SK-N-SH (cell line): ENCODE measurements at regions of chr1 and their contacts with region 1.

Region 1: DNA sequence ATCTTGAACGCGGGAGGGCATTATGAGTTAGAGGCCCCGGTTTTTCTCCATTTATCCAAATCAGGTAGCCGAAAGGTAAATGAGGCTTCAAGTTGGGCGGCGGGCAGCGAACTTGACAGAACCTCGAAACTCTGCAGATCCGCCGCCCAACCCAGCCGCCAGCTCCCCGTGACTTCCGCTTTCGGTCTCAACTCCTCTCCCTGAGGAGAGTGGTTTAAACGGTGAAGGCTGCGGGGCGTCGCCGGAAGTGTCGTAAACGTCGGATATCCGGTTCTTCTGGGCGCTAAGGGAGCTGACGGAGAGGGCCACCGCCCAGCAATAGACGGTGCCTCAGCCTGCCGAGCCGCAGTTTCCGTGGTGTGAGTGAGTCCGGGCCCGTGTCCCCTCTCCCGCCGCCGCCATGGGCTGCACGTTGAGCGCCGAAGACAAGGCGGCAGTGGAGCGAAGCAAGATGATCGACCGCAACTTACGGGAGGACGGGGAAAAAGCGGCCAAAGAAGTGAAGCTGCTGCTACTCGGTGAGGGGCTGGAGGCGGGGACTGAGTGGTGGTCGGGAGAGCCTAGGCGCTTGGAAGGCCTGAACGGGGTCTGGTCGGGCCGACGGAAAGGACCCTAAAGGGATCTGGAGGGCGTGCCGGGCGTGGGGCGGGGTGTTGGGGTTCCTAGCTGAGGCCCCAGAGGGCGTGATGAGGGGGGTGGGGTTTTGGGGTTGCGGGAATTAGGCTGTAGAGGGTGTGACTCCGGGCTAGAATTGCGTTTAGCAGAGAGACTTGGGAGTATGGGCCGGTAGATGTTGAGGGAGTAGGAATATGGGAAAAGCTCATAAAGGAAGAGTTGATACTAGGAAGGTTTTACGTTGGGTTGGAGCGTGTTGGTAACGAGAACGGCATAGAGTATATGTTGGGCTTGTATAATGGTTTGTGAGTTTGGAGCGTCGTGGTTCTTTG is at the start of gene GNAI3:
- DNase-seq: peak; percentile 90
- H3K4me3 ChIP-seq: peak within 1 kb of the TSS; percentile 80 to 88
- H3K27ac ChIP-seq: peak within 1 kb of the TSS; percentile 88 to 93
- H3K4me1 ChIP-seq: peaks cover 3 to 20% of the 10 kb centered on the region in 2 experiments; a peak in 3 of 4 replicates
- H3K27me3 ChIP-seq: no peaks in the 10 kb centered on the region
- CTCF ChIP-seq: no peak
- EP300 ChIP-seq: peak in 1 of 2 experiments; percentile 33; a peak in 1 of 4 replicates
- RAD21 ChIP-seq: no peak; the same call in 1 of the 2 replicates
- polyA plus RNA-seq, gene GNAI3: 4.0 and 4.8 TPM in 2 replicates

Region 2: GRCh38 chr1:109620841-109621286 is 72.3 kb after region 1 on chr1:
- CTCF ChIA-PET with region 1: interaction called, 14 read pairs
- POLR2A ChIA-PET with region 1: interaction called, 22 read pairs
- DNase-seq: peak; percentile 95
- H3K4me3 ChIP-seq: peak overlapping the region; percentile 85 to 98
- H3K27ac ChIP-seq: peak overlapping the region; percentile 97 to 98
- H3K4me1 ChIP-seq: peaks cover 28 to 60% of the 10 kb centered on the region in 2 experiments; a peak in 3 of 4 replicates
- H3K27me3 ChIP-seq: no peaks in the 10 kb centered on the region
- CTCF ChIP-seq: no peak
- EP300 ChIP-seq: no peak
- RAD21 ChIP-seq: no peak

Region 3: DNA sequence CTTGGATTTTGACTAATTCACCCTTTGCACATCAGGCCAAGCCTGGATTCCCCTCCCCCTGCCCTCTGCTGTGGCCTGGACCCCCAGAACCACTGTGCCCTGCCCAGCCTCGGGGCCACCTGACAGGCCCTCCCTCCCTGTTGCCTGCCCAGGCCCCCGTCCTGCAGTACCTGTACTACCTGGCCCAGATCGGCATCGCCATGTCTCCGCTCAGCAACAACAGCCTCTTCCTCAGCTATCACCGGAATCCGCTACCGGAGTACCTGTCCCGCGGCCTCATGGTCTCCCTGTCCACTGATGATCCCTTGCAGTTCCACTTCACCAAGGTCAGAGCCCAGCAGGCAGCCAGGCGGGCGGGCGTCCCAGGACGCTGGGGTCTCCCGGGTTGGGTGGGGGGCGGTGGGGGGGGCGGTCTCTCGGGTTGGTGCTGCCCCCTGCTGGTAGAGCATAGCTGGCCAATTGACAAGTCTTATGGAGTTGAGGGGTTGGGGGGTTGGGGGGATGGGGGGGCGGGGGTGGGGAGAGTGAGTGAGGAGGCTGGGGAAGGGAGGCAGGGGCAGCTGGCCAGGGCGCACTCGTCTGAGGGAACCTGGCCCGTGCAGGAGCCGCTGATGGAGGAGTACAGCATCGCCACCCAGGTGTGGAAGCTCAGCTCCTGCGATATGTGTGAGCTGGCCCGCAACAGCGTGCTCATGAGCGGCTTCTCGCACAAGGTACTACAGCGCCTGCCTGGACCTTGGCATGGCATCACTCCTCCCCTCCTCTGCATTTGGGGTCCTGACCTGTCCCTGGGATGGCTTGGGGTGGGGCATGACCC is 81.7 kb after region 1 on chr1:
- CTCF ChIA-PET with region 1: interaction called, 75 read pairs
- POLR2A ChIA-PET with region 1: interaction called, 26 read pairs
- DNase-seq: peak; percentile 84
- H3K4me3 ChIP-seq: no peak overlapping the region
- H3K27ac ChIP-seq: peak overlapping the region in 1 of 2 experiments; percentile 97; a peak in 2 of 4 replicates
- H3K4me1 ChIP-seq: peaks cover 0 to 46% of the 10 kb centered on the region in 2 experiments; a peak in 2 of 4 replicates
- H3K27me3 ChIP-seq: no peaks in the 10 kb centered on the region
- CTCF ChIP-seq: 0 out of 2 replicates have a peak, but pooled peaks have one; percentile 4
- EP300 ChIP-seq: no peak
- RAD21 ChIP-seq: no peak

Region 4: DNA sequence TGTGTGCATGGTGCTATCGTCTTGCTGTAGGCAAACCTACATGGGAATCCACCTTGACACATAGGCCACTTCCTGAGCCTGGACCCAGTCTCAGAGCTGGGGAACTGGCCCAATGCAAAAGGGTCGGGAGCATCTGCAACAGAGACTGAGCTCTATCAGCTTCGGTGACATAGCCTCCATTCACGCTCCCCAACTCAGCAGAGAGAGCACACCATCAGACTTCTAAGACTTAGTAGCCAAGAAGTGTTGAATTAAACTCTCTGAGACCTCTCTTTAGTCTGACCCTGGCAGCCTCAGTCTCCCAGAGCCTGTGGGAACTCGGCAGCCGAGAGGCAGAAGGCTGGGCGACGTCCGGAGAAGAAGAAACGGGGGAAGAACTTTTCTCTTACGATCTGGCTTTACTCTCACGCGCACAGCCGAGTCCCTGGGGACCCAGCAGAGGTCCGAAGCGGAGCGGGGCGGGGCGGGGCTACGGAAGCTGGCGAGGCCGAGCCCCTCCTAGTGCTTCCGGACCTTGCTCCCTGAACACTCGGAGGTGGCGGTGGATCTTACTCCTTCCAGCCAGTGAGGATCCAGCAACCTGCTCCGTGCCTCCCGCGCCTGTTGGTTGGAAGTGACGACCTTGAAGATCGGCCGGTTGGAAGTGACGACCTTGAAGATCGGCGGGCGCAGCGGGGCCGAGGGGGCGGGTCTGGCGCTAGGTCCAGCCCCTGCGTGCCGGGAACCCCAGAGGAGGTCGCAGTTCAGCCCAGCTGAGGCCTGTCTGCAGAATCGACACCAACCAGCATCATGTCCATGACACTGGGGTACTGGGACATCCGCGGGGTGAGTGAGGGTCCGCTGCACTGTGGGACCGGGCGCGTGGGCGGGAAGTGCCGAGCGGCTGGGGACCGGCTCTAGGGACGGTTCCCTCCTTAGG is 107.3 kb after region 1 on chr1 and contains the start of gene GSTM4:
- CTCF ChIA-PET with region 1: interaction called, 297 read pairs
- POLR2A ChIA-PET with region 1: interaction called, 21 read pairs
- DNase-seq: peak; percentile 89
- H3K4me3 ChIP-seq: peak within 1 kb of the TSS; percentile 69 to 72
- H3K27ac ChIP-seq: peak within 1 kb of the TSS; percentile 41 to 83; a peak in 3 of 4 replicates
- H3K4me1 ChIP-seq: peaks cover 12% of the 10 kb centered on the region in 2 experiments; a peak in 3 of 4 replicates
- H3K27me3 ChIP-seq: no peaks in the 10 kb centered on the region
- CTCF ChIP-seq: peak; percentile 20; the same call in 1 of the 2 replicates
- EP300 ChIP-seq: no peak
- RAD21 ChIP-seq: no peak
- polyA plus RNA-seq, gene GSTM4: 34.2 and 36.1 TPM in 2 replicates